Calu3 (cell line): ENCODE measurements at regions of chr2 and their contacts with region 1.

Region 1: DNA sequence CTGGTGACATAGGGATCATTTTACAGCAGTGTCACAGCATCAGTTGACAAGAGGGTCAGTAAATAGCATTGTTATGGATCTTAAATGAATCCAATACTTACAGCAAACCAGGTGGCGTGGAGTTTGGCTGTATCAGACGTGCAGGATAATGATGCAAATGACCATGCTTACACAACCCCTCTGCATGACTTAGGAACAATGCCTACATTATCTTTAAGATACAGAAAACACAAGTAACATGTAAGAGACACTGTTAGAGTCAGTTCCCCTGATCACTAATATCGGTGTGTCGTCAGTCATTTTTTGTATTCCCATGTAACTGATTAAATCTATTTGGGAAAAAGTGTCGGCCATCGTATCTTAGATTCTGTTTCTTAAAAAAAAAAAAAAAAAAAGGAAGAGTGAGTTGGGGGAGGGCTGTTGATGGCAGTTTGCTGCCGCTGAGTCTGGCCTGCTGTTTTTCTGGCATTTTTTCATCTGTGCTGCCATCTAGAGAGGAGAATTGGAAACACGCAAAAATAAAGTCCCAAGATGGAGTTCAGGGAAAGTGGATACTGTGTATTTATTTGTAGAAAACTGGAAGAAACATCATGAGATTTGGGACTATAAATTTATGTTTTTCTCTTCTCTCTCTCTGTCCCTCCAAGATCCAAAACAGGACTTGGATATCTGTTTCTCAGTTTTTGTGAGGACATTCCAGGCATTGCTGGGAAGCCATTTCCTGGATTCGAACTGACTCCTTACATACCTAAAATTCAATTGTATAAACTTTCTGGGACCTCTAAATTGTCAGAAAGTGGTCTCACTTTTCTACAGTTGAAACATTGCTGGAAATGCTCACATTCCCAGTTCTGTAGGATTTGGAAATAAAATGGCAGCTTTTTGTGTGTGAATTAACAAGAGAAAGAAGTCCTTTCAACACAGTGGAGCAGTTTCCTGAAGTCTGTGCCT is 60.3 kb upstream of the AGPS start:
- DNase-seq: peak; percentile 53
- H3K4me3 Mint-ChIP-seq: no peak overlapping the region
- H3K27ac Mint-ChIP-seq: peak overlapping the region; percentile 34
- H3K4me1 Mint-ChIP-seq: peaks cover 27% of the 10 kb centered on the region
- H3K27me3 Mint-ChIP-seq: no peaks in the 10 kb centered on the region
- CTCF ChIP-seq: peak; percentile 63

Region 2: GRCh38 chr2:177397481-177398289 is 65.4 kb after region 1 on chr2:
- CTCF ChIA-PET with region 1: no interaction called
- intact Hi-C with region 1: loop called (anchors 5 kb)
- DNase-seq: peak; percentile 54
- H3K4me3 Mint-ChIP-seq: peak overlapping the region; percentile 7
- H3K27ac Mint-ChIP-seq: peak overlapping the region; percentile 70
- H3K4me1 Mint-ChIP-seq: peaks cover 68% of the 10 kb centered on the region
- H3K27me3 Mint-ChIP-seq: no peaks in the 10 kb centered on the region
- CTCF ChIP-seq: no peak

Region 3: GRCh38 chr2:177419274-177419673 is 87.0 kb after region 1 on chr2:
- CTCF ChIA-PET with region 1: interaction called, 8 read pairs
- intact Hi-C with region 1: loop called (anchors 1 kb)
- DNase-seq: no peak
- H3K4me3 Mint-ChIP-seq: no peak overlapping the region
- H3K27ac Mint-ChIP-seq: peak overlapping the region; percentile 55
- H3K4me1 Mint-ChIP-seq: peaks cover 40% of the 10 kb centered on the region
- H3K27me3 Mint-ChIP-seq: no peaks in the 10 kb centered on the region
- CTCF ChIP-seq: no peak

Region 4: GRCh38 chr2:177604271-177605065 is 272.2 kb after region 1 on chr2:
- CTCF ChIA-PET with region 1: interaction called, 3 read pairs
- intact Hi-C with region 1: loop called (anchors 1 kb)
- DNase-seq: peak; percentile 45
- H3K4me3 Mint-ChIP-seq: no peak overlapping the region
- H3K27ac Mint-ChIP-seq: no peak overlapping the region
- H3K4me1 Mint-ChIP-seq: peaks cover 24% of the 10 kb centered on the region
- H3K27me3 Mint-ChIP-seq: no peaks in the 10 kb centered on the region
- CTCF ChIP-seq: no peak

Region 5: GRCh38 chr2:177724398-177725287 is 392.3 kb after region 1 on chr2:
- CTCF ChIA-PET with region 1: no interaction called
- intact Hi-C with region 1: loop called (anchors 1 kb)
- DNase-seq: peak; percentile 58
- H3K4me3 Mint-ChIP-seq: no peak overlapping the region
- H3K27ac Mint-ChIP-seq: no peak overlapping the region
- H3K4me1 Mint-ChIP-seq: no peaks in the 10 kb centered on the region
- H3K27me3 Mint-ChIP-seq: peaks cover 13% of the 10 kb centered on the region
- CTCF ChIP-seq: peak; percentile 88

Region 6: DNA sequence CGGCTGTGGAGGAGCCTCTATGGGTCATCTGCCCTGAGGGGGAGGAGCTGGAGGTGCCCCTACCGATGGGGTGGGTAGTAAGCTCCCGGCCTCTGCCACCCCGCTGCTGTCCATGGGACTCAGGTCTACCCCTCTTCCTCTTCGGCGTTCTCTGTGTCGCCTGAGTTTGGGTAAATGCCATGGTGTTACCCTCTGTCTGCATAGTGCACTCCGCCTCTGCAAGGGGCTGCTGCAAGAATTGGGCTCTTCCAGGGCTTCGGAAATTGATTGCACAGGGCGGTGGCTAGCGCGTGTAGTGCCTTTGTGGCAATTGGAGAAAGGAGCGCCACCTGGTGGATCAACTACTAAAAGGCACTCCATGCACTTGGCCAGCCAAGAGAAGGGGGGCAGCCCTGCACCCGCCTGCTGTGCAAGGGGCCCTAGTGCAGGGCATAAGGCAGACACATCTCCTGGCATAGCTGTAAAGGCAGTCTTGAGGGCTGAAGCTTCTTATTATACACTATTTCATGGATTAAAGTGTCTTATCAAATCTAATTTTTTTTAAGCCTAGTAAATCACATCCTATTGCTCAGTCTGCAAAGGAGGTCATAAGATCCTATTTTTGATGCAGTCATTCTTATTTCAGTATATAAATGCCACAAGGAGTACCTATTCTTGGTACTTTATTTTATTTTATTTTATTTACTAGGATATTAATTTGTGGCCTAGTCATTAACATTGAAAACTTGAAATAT is 431.4 kb after region 1 on chr2:
- CTCF ChIA-PET with region 1: no interaction called
- intact Hi-C with region 1: loop called (anchors 10 kb)
- DNase-seq: peak; percentile 82
- H3K4me3 Mint-ChIP-seq: no peak overlapping the region
- H3K27ac Mint-ChIP-seq: no peak overlapping the region
- H3K4me1 Mint-ChIP-seq: peaks cover 3% of the 10 kb centered on the region
- H3K27me3 Mint-ChIP-seq: peaks cover 18% of the 10 kb centered on the region
- CTCF ChIP-seq: peak; percentile 89